Caco-2 (cell line): ENCODE measurements at regions of chr15 and their contacts with region 1.

Region 1: GRCh38 chr15:44738340-44738984 is 2.1 kb downstream of the TRIM69 start:
- DNase-seq: peak in 1 of 2 experiments; percentile 56
- H3K4me3 ChIP-seq: no peak overlapping the region
- H3K4me3 Mint-ChIP-seq: no peak overlapping the region
- H3K27ac Mint-ChIP-seq: no peak overlapping the region
- H3K4me1 ChIP-seq: no peaks in the 10 kb centered on the region
- H3K4me1 Mint-ChIP-seq: no peaks in the 10 kb centered on the region
- H3K27me3 ChIP-seq: no peaks in the 10 kb centered on the region
- H3K27me3 Mint-ChIP-seq: no peaks in the 10 kb centered on the region
- CTCF ChIP-seq: peak; percentile 54

Region 2: GRCh38 chr15:44584162-44584749 is 154.2 kb before region 1 on chr15:
- CTCF ChIA-PET with region 1: interaction called, 13 read pairs
- POLR2A ChIA-PET with region 1: interaction called, 13 read pairs
- intact Hi-C with region 1: loop called (anchors 2 kb)
- DNase-seq: peak in 1 of 2 experiments; percentile 48
- H3K4me3 ChIP-seq: no peak overlapping the region
- H3K4me3 Mint-ChIP-seq: no peak overlapping the region
- H3K27ac Mint-ChIP-seq: no peak overlapping the region
- H3K4me1 ChIP-seq: no peaks in the 10 kb centered on the region
- H3K4me1 Mint-ChIP-seq: no peaks in the 10 kb centered on the region
- H3K27me3 ChIP-seq: no peaks in the 10 kb centered on the region
- H3K27me3 Mint-ChIP-seq: no peaks in the 10 kb centered on the region
- CTCF ChIP-seq: peak in 1 of 2 experiments; percentile 49

Region 3: GRCh38 chr15:44593042-44593736 is 145.3 kb before region 1 on chr15:
- CTCF ChIA-PET with region 1: no interaction called
- POLR2A ChIA-PET with region 1: no interaction called
- intact Hi-C with region 1: loop called (anchors 5 kb)
- DNase-seq: no peak
- H3K4me3 ChIP-seq: no peak overlapping the region
- H3K4me3 Mint-ChIP-seq: no peak overlapping the region
- H3K27ac Mint-ChIP-seq: no peak overlapping the region
- H3K4me1 ChIP-seq: no peaks in the 10 kb centered on the region
- H3K4me1 Mint-ChIP-seq: no peaks in the 10 kb centered on the region
- H3K27me3 ChIP-seq: no peaks in the 10 kb centered on the region
- H3K27me3 Mint-ChIP-seq: no peaks in the 10 kb centered on the region
- CTCF ChIP-seq: peak in 1 of 2 experiments; percentile 5

Region 4: DNA sequence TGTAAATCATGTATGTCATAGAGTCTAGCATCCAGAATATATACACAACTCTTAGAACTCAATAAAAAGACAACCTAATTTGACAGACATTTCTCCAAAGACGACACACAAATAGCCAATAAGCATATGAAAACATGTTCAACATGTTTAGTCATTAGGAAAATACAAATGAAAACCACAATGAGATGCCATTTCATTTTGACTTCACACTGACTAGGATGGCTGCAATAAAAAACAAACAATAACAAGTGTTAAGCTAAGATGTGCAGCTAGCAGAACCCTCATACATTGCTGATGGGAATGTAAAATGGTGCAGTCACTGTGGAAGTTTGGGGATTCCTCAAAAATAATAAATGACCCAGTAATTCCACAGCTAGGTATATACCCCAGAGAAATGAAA is 91.4 kb before region 1 on chr15:
- CTCF ChIA-PET with region 1: no interaction called
- POLR2A ChIA-PET with region 1: no interaction called
- intact Hi-C with region 1: no loop called
- DNase-seq: no peak
- H3K4me3 ChIP-seq: no peak overlapping the region
- H3K4me3 Mint-ChIP-seq: no peak overlapping the region
- H3K27ac Mint-ChIP-seq: no peak overlapping the region
- H3K4me1 ChIP-seq: no peaks in the 10 kb centered on the region
- H3K4me1 Mint-ChIP-seq: no peaks in the 10 kb centered on the region
- H3K27me3 ChIP-seq: no peaks in the 10 kb centered on the region
- H3K27me3 Mint-ChIP-seq: no peaks in the 10 kb centered on the region
- CTCF ChIP-seq: no peak

Region 5: DNA sequence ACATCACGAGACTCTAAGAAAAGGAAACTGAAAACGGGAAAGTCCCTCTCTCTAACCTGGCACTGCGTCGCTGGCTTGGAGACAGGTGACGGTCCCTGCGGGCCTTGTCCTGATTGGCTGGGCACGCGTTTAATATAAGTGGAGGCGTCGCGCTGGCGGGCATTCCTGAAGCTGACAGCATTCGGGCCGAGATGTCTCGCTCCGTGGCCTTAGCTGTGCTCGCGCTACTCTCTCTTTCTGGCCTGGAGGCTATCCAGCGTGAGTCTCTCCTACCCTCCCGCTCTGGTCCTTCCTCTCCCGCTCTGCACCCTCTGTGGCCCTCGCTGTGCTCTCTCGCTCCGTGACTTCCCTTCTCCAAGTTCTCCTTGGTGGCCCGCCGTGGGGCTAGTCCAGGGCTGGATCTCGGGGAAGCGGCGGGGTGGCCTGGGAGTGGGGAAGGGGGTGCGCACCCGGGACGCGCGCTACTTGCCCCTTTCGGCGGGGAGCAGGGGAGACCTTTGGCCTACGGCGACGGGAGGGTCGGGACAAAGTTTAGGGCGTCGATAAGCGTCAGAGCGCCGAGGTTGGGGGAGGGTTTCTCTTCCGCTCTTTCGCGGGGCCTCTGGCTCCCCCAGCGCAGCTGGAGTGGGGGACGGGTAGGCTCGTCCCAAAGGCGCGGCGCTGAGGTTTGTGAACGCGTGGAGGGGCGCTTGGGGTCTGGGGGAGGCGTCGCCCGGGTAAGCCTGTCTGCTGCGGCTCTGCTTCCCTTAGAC is 26.9 kb before region 1 on chr15 and contains the start of gene B2M:
- CTCF ChIA-PET with region 1: interaction called, 11 read pairs
- POLR2A ChIA-PET with region 1: interaction called, 4 read pairs
- intact Hi-C with region 1: no loop called
- DNase-seq: peak; percentile 93 to 94
- H3K4me3 ChIP-seq: peak within 1 kb of the TSS; percentile 66
- H3K4me3 Mint-ChIP-seq: peak within 1 kb of the TSS; percentile 100
- H3K27ac Mint-ChIP-seq: peak within 1 kb of the TSS; percentile 99
- H3K4me1 ChIP-seq: peaks cover 14% of the 10 kb centered on the region
- H3K4me1 Mint-ChIP-seq: no peaks in the 10 kb centered on the region
- H3K27me3 ChIP-seq: no peaks in the 10 kb centered on the region
- H3K27me3 Mint-ChIP-seq: no peaks in the 10 kb centered on the region
- CTCF ChIP-seq: no peak
- total RNA-seq, gene B2M: 269 and 273 TPM in 2 replicates